ENCODE measurements at regions of chr4 and their contacts with region 1.

Region 1: DNA sequence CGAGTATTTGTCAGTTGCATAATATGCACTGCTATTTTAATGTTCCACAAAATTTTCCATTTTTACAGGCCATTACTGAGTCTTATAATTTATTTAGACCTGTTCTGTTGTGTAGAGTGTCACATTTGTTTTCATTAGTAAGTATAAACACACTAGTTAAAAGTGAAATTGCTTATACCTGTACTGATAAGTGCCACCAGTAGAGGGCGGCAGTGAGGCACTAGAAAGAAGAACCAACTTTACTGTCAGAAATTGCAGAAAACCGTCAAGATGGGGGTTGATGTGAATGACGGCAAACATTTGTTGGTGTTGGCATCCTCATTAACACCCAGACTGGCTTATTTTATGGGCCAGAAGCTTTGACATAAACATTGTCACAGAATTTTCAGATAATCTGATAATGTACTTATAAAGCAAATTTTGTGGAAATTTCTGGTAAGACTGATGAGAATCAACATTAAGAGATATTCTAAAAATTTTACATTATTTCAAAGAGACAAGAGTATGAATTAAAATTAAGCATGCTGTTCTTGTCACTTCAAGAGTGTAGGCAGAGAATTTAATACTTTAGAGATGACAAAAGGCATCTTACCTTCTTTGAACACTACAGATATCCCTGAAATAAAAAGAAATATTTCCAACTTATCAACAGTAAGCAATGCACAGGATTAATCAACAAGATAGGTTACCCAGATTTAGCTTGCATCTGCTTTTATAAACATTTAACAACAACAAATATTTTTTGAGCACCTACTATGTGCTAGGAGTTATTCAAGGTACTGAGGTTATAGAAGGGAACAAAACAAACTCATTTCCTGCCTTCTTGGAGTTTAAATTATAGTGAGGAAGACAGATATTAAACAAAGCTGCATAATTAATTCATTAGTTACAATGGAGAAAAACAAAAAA is 24.9 kb downstream of the ALPK1 start:
- DNase-seq: peak; percentile 82
- H3K4me3 Mint-ChIP-seq: no peak overlapping the region
- H3K27ac Mint-ChIP-seq: no peak overlapping the region
- H3K4me1 Mint-ChIP-seq: peaks cover 22% of the 10 kb centered on the region
- H3K27me3 Mint-ChIP-seq: no peaks in the 10 kb centered on the region

Region 2: DNA sequence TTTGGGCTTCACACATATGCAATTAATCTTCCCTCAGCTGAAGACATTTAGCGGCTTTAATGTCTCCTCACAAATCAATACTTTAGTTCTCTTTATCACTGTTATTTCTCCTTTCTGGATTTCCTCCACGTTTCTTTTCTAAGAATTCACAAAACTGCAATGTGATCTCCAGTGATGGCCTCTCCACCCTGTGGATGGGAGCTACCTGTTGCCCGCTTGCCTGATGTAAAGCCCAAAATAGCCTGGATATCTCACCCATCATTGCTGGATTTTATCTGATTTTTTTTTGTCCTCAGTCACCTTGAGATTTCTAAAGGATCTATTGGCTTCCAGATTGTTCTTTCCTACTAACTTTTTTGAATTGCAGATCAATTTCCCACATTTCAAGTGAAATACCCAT is 306.1 kb before region 1 on chr4:
- CTCF ChIA-PET with region 1: no interaction called
- POLR2A ChIA-PET with region 1: no interaction called
- intact Hi-C with region 1: no loop called
- DNase-seq: no peak
- H3K4me3 Mint-ChIP-seq: no peak overlapping the region
- H3K27ac Mint-ChIP-seq: no peak overlapping the region
- H3K4me1 Mint-ChIP-seq: no peaks in the 10 kb centered on the region
- H3K27me3 Mint-ChIP-seq: no peaks in the 10 kb centered on the region

Region 3: DNA sequence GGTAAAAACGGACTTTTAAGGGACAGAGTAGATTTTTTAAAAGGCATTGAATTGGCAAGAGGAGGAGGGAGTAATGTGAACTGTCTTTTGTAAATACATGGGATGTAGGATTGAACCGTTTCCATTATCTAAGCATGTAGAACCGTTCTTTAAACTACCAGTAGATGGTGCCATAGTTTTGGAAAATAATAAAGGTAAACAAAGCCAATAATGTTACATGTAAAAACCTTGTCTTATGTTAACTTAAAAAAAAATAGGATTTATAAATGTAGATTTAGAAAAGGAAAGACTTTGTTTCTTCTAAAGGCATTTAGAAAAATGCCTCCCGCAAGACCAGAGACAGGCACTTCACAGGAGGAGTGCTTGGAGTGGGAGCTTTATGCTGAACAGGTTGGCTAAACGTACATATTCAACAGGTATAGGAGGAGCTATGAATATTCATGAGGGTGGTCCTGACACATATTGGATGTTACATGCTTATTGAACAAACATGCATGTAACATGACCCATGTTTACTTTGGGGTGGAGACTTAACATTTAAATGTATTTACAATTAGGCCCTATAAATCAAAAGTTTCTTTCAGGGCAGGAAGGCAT is 222.2 kb before region 1 on chr4:
- CTCF ChIA-PET with region 1: interaction called, 6 read pairs
- POLR2A ChIA-PET with region 1: no interaction called
- intact Hi-C with region 1: loop called (anchors 5 kb)
- DNase-seq: no peak
- H3K4me3 Mint-ChIP-seq: no peak overlapping the region
- H3K27ac Mint-ChIP-seq: no peak overlapping the region
- H3K4me1 Mint-ChIP-seq: peaks cover 1% of the 10 kb centered on the region
- H3K27me3 Mint-ChIP-seq: peaks cover 2% of the 10 kb centered on the region

Region 4: DNA sequence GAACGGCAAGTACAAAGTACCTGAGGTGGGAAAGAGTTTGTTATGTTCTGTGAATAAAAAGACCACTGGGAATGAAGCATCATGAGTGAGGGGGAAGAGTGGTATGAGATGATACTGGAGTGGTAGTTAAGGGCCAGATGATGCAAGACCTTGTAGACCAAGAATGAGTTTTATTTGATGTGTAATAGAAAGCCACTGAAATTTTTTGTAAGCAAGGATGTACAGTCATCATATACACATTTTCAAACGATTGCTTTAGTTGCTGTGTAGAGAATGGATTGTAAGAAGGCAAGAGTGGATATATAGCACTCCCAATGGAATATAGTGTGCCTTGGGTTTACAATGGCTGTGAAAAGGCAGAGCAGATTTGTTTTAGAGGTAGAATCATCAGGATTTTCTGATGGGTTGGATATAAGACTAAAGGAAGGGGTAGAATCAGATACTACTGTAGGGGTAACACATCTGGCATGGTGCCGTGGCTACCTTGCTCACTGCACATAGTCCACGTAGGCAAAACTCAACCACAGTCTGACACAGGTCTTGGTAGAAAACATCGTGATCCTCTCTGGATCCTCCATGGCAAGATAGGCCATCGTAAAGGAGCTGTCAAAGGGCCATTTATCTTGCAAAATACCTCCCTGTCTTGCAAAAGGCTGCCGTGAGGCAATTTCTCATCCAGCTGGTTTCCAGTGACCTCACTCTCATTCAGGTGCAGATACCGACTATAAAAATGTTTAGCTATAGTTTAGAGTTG is 51.2 kb before region 1 on chr4:
- CTCF ChIA-PET with region 1: interaction called, 6 read pairs
- POLR2A ChIA-PET with region 1: interaction called, 3 read pairs
- intact Hi-C with region 1: loop called (anchors 1 kb)
- DNase-seq: no peak
- H3K4me3 Mint-ChIP-seq: no peak overlapping the region
- H3K27ac Mint-ChIP-seq: peak overlapping the region; percentile 77
- H3K4me1 Mint-ChIP-seq: peaks cover 60% of the 10 kb centered on the region
- H3K27me3 Mint-ChIP-seq: no peaks in the 10 kb centered on the region

Region 5: GRCh38 chr4:112302320-112303274 is 19.4 kb before region 1 on chr4:
- CTCF ChIA-PET with region 1: interaction called, 5 read pairs
- POLR2A ChIA-PET with region 1: interaction called, 5 read pairs
- intact Hi-C with region 1: loop called (anchors 2 kb)
- DNase-seq: peak; percentile 29
- H3K4me3 Mint-ChIP-seq: no peak overlapping the region
- H3K27ac Mint-ChIP-seq: no peak overlapping the region
- H3K4me1 Mint-ChIP-seq: peaks cover 21% of the 10 kb centered on the region
- H3K27me3 Mint-ChIP-seq: no peaks in the 10 kb centered on the region

Region 6: DNA sequence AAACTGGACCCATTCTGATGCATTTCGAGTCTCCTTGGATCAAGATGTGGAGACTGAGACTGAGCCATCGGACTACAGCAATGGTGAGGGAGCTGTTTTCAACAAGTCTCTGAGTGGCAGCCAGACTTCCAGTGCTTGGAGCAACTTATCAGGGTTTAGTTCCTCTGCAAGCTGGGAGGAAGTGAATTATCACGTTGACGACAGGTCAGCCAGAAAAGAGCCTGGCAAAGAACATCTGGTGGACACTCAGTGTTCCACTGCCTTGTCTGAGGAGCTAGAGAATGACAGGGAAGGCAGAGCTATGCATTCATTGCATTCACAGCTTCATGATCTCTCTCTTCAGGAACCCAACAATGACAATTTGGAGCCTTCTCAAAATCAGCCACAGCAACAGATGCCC is 109.1 kb after region 1 on chr4:
- CTCF ChIA-PET with region 1: no interaction called
- POLR2A ChIA-PET with region 1: no interaction called
- intact Hi-C with region 1: loop called (anchors 5 kb)
- DNase-seq: no peak
- H3K4me3 Mint-ChIP-seq: no peak overlapping the region
- H3K27ac Mint-ChIP-seq: no peak overlapping the region
- H3K4me1 Mint-ChIP-seq: no peaks in the 10 kb centered on the region
- H3K27me3 Mint-ChIP-seq: no peaks in the 10 kb centered on the region

Measured in activated CD4-positive, alpha-beta memory T cell treated with anti-CD3 and anti-CD28 coated beads for 36 hours (primary cell).